GM23248 (cell line): ENCODE measurements at regions of chr12 and their contacts with region 1.

Region 1: DNA sequence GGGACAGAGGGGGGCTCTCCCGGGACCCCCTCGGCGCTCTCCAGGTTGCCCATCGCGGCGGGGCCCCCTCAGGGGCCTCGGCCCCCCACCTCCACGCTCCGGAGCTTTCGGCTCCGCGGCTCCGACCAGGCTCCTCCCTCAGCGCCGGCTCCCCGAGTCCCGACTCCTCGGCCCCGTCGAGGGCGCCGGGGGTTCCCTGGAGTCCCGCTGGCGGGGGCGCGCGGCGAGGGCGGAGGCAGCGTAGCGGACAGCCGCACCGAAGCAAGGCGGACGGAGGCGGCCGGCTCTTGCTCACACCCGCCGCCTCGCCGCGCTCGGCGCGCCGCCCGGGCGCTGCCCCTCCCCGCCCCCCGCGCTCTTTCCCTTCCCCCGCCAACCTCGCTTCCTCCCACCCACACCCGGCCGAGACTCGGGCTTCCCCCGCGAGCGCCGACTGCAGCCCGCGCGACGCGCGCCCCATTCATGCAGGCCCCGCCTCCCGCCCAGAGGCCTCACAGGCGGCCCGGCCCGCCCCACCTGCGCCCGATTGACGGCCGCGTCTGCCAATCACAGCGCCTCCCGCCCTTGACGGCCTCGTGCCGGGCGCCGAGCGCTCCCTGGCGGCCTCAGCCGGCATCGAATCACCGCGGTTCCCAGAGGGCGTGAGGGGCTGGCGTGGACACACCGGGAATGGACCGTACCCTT is at the start of gene FMNL3:
- DNase-seq: peak; percentile 99
- H3K4me3 ChIP-seq: peak within 1 kb of the TSS; percentile 90
- H3K27ac ChIP-seq: peak within 1 kb of the TSS; percentile 76
- H3K4me1 ChIP-seq: peaks cover 39% of the 10 kb centered on the region
- H3K27me3 ChIP-seq: no peaks in the 10 kb centered on the region
- total RNA-seq, gene FMNL3: 24.0 and 32.9 TPM in 2 replicates

Region 2: GRCh38 chr12:49314811-49315210 is 392.5 kb before region 1 on chr12:
- in situ Hi-C with region 1: no loop called
- DNase-seq: no peak
- H3K4me3 ChIP-seq: no peak overlapping the region
- H3K27ac ChIP-seq: no peak overlapping the region
- H3K4me1 ChIP-seq: no peaks in the 10 kb centered on the region
- H3K27me3 ChIP-seq: no peaks in the 10 kb centered on the region

Region 3: DNA sequence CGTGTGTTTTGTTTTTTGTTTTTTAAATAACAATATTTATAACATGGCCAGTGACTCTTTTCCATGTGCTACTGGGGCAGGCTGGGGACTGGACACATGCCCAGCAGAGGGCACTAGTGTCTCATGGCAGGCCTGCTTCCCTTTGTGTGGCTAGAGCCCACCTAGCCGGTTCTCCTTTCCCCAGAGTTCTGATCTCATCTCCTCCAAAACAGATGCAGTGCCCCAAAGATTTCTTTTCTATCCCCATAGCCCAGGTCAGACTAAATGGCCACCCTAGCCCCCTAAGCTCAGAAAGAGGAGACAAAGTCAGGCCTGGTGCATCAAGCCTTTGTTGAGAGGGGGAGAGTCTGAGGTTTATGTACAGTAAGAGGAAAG is 62.7 kb before region 1 on chr12:
- in situ Hi-C with region 1: loop called (anchors 5 kb)
- DNase-seq: peak; percentile 85
- H3K4me3 ChIP-seq: no peak overlapping the region
- H3K27ac ChIP-seq: no peak overlapping the region
- H3K4me1 ChIP-seq: no peaks in the 10 kb centered on the region
- H3K27me3 ChIP-seq: no peaks in the 10 kb centered on the region